Tibial artery (tissue), 4 donors: ENCODE measurements at regions of chr21 and their contacts with region 1.

Region 1: DNA sequence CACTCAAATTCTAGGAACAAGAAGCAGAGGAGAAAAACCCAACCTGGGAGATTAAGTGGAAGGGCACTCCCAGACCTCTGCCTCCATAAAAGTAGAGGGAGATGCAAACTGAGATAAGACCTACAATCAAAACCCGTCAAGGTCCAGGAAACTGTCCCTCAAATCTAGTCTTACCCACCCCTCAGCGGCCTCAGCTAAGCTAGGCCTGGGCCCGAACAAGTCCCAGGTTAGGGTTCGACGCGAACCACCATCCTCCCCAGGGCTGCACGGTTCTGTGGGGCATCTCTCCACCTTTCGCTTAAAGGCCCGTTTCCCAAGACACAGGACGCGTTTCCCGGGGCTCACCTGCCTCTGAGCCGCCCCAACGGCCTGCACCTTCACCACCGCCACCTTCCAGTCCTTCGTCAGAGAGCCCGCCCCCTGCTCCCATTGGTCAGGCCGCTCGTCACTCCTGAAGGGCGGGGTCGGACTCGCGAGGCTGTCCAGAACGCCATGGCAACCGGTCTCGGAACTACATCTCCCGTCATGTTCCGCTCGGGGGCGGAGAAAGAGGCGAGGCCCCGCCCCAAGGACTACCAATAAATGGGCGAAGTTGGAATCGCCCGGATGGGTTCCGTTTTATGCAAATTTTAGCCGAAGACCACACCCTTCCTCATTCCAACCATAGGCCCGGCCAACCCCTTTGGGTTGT is at the start of gene CRYZL1:
- DNase-seq: peak; percentile 100
- H3K4me3 ChIP-seq: peak within 1 kb of the TSS; percentile 94 to 97
- H3K27ac ChIP-seq: peak within 1 kb of the TSS; percentile 89 to 90
- H3K4me1 ChIP-seq: peaks cover 0 to 38% (median 22%) of the 10 kb centered on the region in 4 donors
- H3K27me3 ChIP-seq: no peaks in the 10 kb centered on the region
- CTCF ChIP-seq: peak in 1 of 2 experiments; percentile 5

Region 2: DNA sequence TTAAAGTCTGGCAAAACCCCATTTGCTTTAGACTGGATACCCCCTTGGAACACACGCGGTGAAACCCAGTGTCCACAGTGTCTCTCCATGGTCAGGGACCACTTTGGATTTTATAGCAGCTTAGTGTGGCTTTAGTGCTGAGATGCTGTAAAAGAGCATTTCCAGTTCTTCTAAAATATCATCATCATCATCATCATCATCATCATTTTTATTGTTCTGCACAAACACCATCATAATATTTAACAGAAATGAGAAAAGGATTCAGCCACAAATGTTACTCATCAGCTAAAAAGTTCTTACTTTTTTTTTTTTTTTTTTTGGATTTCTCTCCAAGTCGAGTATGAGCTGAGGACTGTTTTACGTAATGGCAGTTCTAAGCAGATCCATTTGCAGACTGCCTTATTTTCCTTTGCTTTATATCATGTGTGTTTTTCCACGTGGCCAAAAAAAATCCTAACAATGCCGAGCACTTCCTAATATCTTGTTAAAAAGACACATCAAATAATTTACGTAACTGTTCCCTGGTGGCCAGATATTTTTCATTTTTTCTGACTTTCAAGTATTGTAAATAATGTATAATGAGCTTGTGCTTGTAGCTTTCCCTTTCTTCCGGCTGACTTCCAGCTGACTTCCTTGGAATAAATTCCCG is 1166.2 kb before region 1 on chr21:
- intact Hi-C with region 1: no loop called
- DNase-seq: no peak
- H3K4me3 ChIP-seq: no peak overlapping the region
- H3K27ac ChIP-seq: peak overlapping the region in 1 of 2 donors; percentile 14
- H3K4me1 ChIP-seq: peaks cover 0 to 21% (median 15%) of the 10 kb centered on the region in 4 donors
- H3K27me3 ChIP-seq: no peaks in the 10 kb centered on the region
- CTCF ChIP-seq: no peak

Region 3: GRCh38 chr21:33894736-33895288 is 253.3 kb after region 1 on chr21:
- intact Hi-C with region 1: loop called (anchors 10 kb)
- DNase-seq: peak; percentile 79 to 86
- H3K4me3 ChIP-seq: peak overlapping the region; percentile 34 to 46
- H3K27ac ChIP-seq: peak overlapping the region in 1 of 2 donors; percentile 12
- H3K4me1 ChIP-seq: peaks cover 0 to 25% (median 9%) of the 10 kb centered on the region in 4 donors
- H3K27me3 ChIP-seq: no peaks in the 10 kb centered on the region
- CTCF ChIP-seq: peak; percentile 76 to 78